Activated CD4-positive, alpha-beta T cell treated with anti-CD3 and anti-CD28 coated beads for 36 hours (primary cell): ENCODE measurements at regions of chr6 and their contacts with region 1.

Region 1: GRCh38 chr6:131858765-131859415 is 51.1 kb downstream of the ENPP1 start:
- DNase-seq: no peak
- ATAC-seq: no peak
- H3K4me3 Mint-ChIP-seq: no peak overlapping the region
- H3K27ac Mint-ChIP-seq: no peak overlapping the region
- H3K4me1 Mint-ChIP-seq: no peaks in the 10 kb centered on the region
- H3K27me3 Mint-ChIP-seq: peaks cover 19% of the 10 kb centered on the region

Region 2: DNA sequence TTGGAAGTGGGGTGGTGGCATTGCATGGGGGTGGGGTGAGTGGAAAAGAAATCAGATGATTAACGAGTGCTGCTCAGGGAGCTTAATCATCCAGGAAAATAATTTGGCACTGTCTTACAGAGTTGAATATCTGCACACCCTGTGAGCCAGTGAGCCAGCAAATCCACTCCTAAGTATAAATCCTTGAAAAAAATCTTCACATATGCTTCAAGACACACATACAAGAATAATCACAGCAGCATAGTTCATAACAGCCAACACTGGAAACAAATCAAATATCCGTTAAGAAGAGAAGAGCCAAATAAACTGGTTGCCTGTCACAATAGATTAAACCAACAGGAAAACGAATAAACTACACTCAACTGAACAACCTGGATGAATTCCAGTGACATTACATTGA is 1698.9 kb before region 1 on chr6:
- CTCF ChIA-PET with region 1: no interaction called
- POLR2A ChIA-PET with region 1: no interaction called
- intact Hi-C with region 1: loop called in 1 of 2 experiments (anchors 5 kb)
- DNase-seq: no peak
- ATAC-seq: no peak
- H3K4me3 Mint-ChIP-seq: no peak overlapping the region
- H3K27ac Mint-ChIP-seq: no peak overlapping the region
- H3K4me1 Mint-ChIP-seq: peaks cover 4% of the 10 kb centered on the region
- H3K27me3 Mint-ChIP-seq: no peaks in the 10 kb centered on the region

Region 3: DNA sequence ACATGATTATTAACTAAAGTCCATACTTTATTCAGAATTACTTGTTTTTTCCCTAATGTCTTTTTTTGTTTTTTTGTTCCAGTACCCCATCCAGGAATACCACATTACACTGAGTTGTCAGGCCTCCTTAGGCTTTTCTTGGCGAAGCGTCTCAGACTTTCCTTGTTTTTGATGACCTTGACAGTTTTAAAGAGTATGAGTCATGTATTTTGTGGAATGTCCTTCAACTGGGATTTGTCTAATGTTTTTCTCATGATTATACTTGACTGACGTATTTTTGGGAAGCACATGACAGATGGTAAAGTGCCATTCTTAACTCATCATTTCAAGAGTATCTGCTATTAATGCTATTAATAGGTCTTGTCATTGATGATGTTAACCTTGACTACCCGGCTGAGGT is 27.5 kb before region 1 on chr6:
- CTCF ChIA-PET with region 1: no interaction called
- POLR2A ChIA-PET with region 1: no interaction called
- intact Hi-C with region 1: no loop called
- DNase-seq: no peak
- ATAC-seq: no peak
- H3K4me3 Mint-ChIP-seq: no peak overlapping the region
- H3K27ac Mint-ChIP-seq: no peak overlapping the region
- H3K4me1 Mint-ChIP-seq: no peaks in the 10 kb centered on the region
- H3K27me3 Mint-ChIP-seq: peaks cover 12% of the 10 kb centered on the region